Naive thymus-derived CD4-positive, alpha-beta T cell (primary cell): ENCODE measurements at regions of chr7 and their contacts with region 1.

Region 1: GRCh38 chr7:100428967-100429636 is 529 bp upstream of the MEPCE start:
- DNase-seq: peak; percentile 100
- ATAC-seq: peak; percentile 76
- H3K4me3 ChIP-seq: peak overlapping the region; percentile 88
- H3K4me3 Mint-ChIP-seq: peak overlapping the region; percentile 93 to 100 (median 97)
- H3K27ac ChIP-seq: peak overlapping the region; percentile 97
- H3K27ac Mint-ChIP-seq: peak overlapping the region; percentile 99 to 100 (median 100)
- H3K4me1 ChIP-seq: peaks cover 22 to 29% of the 10 kb centered on the region in 2 donors
- H3K4me1 Mint-ChIP-seq: peaks cover 22 to 56% (median 42%) of the 10 kb centered on the region in 7 donors
- H3K27me3 ChIP-seq: no peaks in the 10 kb centered on the region
- H3K27me3 Mint-ChIP-seq: peaks cover 0 to 24% (median 0%) of the 10 kb centered on the region in 5 donors

Region 2: GRCh38 chr7:100049441-100050311 is 379.4 kb before region 1 on chr7 and contains the start of gene ZSCAN21:
- CTCF ChIA-PET with region 1: no interaction called
- POLR2A ChIA-PET with region 1: interaction called, 5 read pairs
- intact Hi-C with region 1: loop called in 1 of 2 experiments (anchors 1 kb)
- DNase-seq: peak; percentile 70 to 89 (median 78)
- ATAC-seq: peak; percentile 94
- H3K4me3 ChIP-seq: peak within 1 kb of the TSS; percentile 92
- H3K4me3 Mint-ChIP-seq: peak within 1 kb of the TSS; percentile 86 to 95 (median 92)
- H3K27ac ChIP-seq: peak within 1 kb of the TSS; percentile 95
- H3K27ac Mint-ChIP-seq: peak within 1 kb of the TSS; percentile 81 to 98 (median 97)
- H3K4me1 ChIP-seq: peaks cover 0 to 6% of the 10 kb centered on the region in 2 donors
- H3K4me1 Mint-ChIP-seq: peaks cover 4 to 29% (median 25%) of the 10 kb centered on the region in 7 donors
- H3K27me3 ChIP-seq: no peaks in the 10 kb centered on the region
- H3K27me3 Mint-ChIP-seq: peaks cover 0 to 3% (median 0%) of the 10 kb centered on the region in 5 donors
- total RNA-seq, gene ZSCAN21: 3.9 to 10.1 (median 6.2) TPM

Region 3: GRCh38 chr7:100177045-100178001 is 251.8 kb before region 1 on chr7 and contains the starts of genes GPC2 and STAG3:
- CTCF ChIA-PET with region 1: no interaction called
- POLR2A ChIA-PET with region 1: interaction called, 5 read pairs
- intact Hi-C with region 1: loop called (anchors 1 to 2 kb)
- DNase-seq: peak; percentile 95 to 99 (median 98)
- ATAC-seq: peak; percentile 97
- H3K4me3 ChIP-seq: peak within 1 kb of the TSS; percentile 70
- H3K4me3 Mint-ChIP-seq: peak within 1 kb of the TSS; percentile 76 to 84 (median 80)
- H3K27ac ChIP-seq: peak within 1 kb of the TSS; percentile 76
- H3K27ac Mint-ChIP-seq: peak within 1 kb of the TSS; percentile 42 to 92 (median 78)
- H3K4me1 ChIP-seq: peaks cover 7 to 28% of the 10 kb centered on the region in 2 donors
- H3K4me1 Mint-ChIP-seq: peaks cover 28 to 67% (median 52%) of the 10 kb centered on the region in 7 donors
- H3K27me3 ChIP-seq: no peaks in the 10 kb centered on the region
- H3K27me3 Mint-ChIP-seq: peaks cover 0 to 4% (median 0%) of the 10 kb centered on the region in 5 donors
- total RNA-seq, gene GPC2: 8.1 to 30.6 (median 18.2) TPM
- total RNA-seq, gene STAG3: 5.5 to 24.6 (median 9.5) TPM

Region 4: GRCh38 chr7:100456558-100456957 is 27.5 kb after region 1 on chr7:
- CTCF ChIA-PET with region 1: no interaction called
- POLR2A ChIA-PET with region 1: interaction called, 71 read pairs
- intact Hi-C with region 1: no loop called
- DNase-seq: no peak
- ATAC-seq: no peak
- H3K4me3 ChIP-seq: no peak overlapping the region
- H3K4me3 Mint-ChIP-seq: no peak overlapping the region
- H3K27ac ChIP-seq: no peak overlapping the region
- H3K27ac Mint-ChIP-seq: peak overlapping the region in 2 of 9 donors; percentile 43 to 67
- H3K4me1 ChIP-seq: peaks cover 0 to 8% of the 10 kb centered on the region in 2 donors
- H3K4me1 Mint-ChIP-seq: peaks cover 7 to 20% (median 13%) of the 10 kb centered on the region in 7 donors
- H3K27me3 ChIP-seq: no peaks in the 10 kb centered on the region
- H3K27me3 Mint-ChIP-seq: no peaks in the 10 kb centered on the region

Region 5: GRCh38 chr7:100611974-100612729 is 183.1 kb after region 1 on chr7 and contains the start of gene MOSPD3:
- CTCF ChIA-PET with region 1: no interaction called
- POLR2A ChIA-PET with region 1: interaction called, 16 read pairs
- intact Hi-C with region 1: loop called (anchors 1 to 2 kb)
- DNase-seq: peak; percentile 97 to 99 (median 98)
- ATAC-seq: peak; percentile 94
- H3K4me3 ChIP-seq: peak within 1 kb of the TSS; percentile 99
- H3K4me3 Mint-ChIP-seq: peak within 1 kb of the TSS; percentile 92 to 99 (median 98)
- H3K27ac ChIP-seq: peak within 1 kb of the TSS; percentile 92
- H3K27ac Mint-ChIP-seq: peak within 1 kb of the TSS; percentile 97 to 100 (median 100)
- H3K4me1 ChIP-seq: peaks cover 10 to 16% of the 10 kb centered on the region in 2 donors
- H3K4me1 Mint-ChIP-seq: peaks cover 18 to 29% (median 24%) of the 10 kb centered on the region in 7 donors
- H3K27me3 ChIP-seq: no peaks in the 10 kb centered on the region
- H3K27me3 Mint-ChIP-seq: peaks cover 0 to 8% (median 0%) of the 10 kb centered on the region in 5 donors
- total RNA-seq, gene MOSPD3: 8.8 to 54.9 (median 13.1) TPM

Region 6: GRCh38 chr7:100889761-100890634 is 460.9 kb after region 1 on chr7:
- CTCF ChIA-PET with region 1: no interaction called
- POLR2A ChIA-PET with region 1: interaction called, 4 read pairs
- intact Hi-C with region 1: loop called in 1 of 2 experiments (anchors 2 kb)
- DNase-seq: peak; percentile 87 to 93 (median 91)
- ATAC-seq: peak; percentile 93
- H3K4me3 ChIP-seq: peak overlapping the region; percentile 80
- H3K4me3 Mint-ChIP-seq: peak overlapping the region; percentile 80 to 90 (median 88)
- H3K27ac ChIP-seq: peak overlapping the region; percentile 66
- H3K27ac Mint-ChIP-seq: peak overlapping the region in 6 of 9 donors; percentile 14 to 95 (median 76)
- H3K4me1 ChIP-seq: peaks cover 31 to 45% of the 10 kb centered on the region in 2 donors
- H3K4me1 Mint-ChIP-seq: peaks cover 32 to 48% (median 41%) of the 10 kb centered on the region in 7 donors
- H3K27me3 ChIP-seq: no peaks in the 10 kb centered on the region
- H3K27me3 Mint-ChIP-seq: peaks cover 16 to 40% (median 22%) of the 10 kb centered on the region in 5 donors